GM12878 (cell line): ENCODE measurements at regions of chr11 and their contacts with region 1.

Region 1: GRCh38 chr11:3037040-3037944 is 19.9 kb downstream of the CARS1 start:
- DNase-seq: no peak
- ATAC-seq: peak; percentile 86
- H3K4me3 ChIP-seq: no peak overlapping the region
- H3K27ac ChIP-seq: peak overlapping the region; percentile 69
- H3K4me1 ChIP-seq: peaks cover 29% of the 10 kb centered on the region
- H3K27me3 ChIP-seq: no peaks in the 10 kb centered on the region
- CTCF ChIP-seq: peak; percentile 46 to 75 (median 68)
- EP300 ChIP-seq: no peak
- POLR2A ChIP-seq: 0 out of 2 replicates have a peak, but pooled peaks have one; percentile 22
- RAD21 ChIP-seq: peak; percentile 60

Region 2: DNA sequence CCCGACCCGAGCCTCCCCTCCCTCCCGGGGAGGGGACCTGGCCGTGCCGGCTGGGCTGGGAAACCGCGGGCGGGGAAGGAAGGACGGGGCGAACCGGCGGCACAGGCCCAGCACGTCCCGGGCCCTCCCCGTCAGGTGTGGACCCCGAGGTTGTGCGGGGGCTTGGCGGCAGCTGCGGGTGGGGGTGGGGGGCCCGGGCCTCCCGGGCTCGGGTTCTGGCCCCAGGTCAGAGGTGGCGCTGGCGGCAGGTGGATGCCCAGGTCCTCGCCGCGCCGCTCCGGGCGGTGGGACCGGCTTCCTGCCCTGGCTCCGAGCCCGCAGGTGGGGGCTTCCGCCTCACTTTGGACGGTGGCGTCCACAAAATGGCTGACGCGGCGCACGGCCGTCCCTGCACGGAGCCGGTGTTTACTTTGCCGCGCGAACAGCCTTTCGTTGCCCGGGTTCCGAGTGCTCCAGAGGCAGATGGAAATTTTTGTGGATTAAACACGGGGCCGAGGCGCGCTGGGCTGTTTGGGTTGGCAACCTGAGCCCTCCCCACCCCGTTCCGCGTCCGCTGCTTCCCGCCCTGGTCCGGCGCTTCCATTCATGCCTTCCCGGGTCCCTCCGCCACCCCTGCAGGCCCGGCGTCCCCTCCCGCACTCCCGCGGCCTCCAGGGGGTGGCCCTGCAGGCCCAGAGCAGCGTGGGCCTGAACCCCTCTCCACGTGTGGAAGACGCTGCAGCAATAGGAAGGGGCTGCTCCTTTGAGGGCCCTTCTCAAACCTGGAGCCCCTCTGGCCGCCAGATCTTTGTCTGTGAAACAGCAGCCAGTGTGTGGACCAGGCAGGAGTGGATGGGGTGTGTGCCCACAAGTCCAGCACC is 245.5 kb before region 1 on chr11:
- CTCF ChIA-PET with region 1: no interaction called
- POLR2A ChIA-PET with region 1: no interaction called
- RAD21 ChIA-PET with region 1: no interaction called
- SMC1A ChIA-PET with region 1: no interaction called
- in situ Hi-C with region 1: no loop called
- intact Hi-C with region 1: no loop called
- DNase-seq: no peak
- ATAC-seq: no peak
- H3K4me3 ChIP-seq: no peak overlapping the region
- H3K27ac ChIP-seq: no peak overlapping the region
- H3K4me1 ChIP-seq: no peaks in the 10 kb centered on the region
- H3K27me3 ChIP-seq: no peaks in the 10 kb centered on the region; a peak in 1 of 4 replicates
- CTCF ChIP-seq: no peak
- EP300 ChIP-seq: no peak
- POLR2A ChIP-seq: no peak
- RAD21 ChIP-seq: no peak

Region 3: DNA sequence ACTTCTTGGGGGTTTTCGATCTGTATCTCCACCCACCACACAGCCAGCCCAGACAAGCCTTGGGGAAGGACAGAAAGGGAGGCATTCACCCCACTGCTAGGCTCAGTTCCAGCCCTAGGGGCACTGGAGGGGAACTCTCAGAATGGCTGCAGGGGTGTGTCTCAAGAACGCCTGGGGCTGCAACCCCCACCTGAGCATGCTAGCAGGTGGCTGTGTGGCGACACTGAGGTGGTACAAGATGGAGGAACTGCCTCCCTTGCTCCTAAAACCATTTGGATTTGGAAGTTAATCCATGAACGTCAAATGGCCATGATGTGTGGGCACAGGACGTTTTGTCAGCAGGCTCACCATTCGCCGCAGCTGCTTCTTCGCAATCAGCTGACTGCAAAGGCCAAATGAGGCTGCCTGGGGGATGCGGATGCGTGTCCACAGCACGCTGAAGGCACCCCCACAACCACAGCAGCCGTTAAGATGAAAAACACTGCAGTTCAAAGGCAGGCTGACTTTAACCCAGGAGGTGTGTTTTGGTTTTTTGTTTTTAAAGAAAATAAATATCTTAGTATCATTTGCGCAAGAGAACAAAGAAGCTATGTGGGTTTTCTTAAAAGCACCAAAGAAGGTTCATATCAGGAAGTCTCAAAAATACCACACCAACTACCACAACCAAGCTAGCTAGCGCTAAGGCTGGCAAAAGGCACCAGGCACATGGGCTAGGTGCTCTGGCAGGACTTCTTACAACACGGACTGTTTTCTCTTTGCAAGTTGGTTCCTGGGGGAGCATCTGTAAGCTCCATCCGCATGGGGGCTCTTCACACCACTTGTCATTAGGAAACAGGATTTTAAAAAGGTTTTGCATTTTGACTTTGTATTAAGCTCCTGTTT is 23.0 kb before region 1 on chr11:
- CTCF ChIA-PET with region 1: interaction called, 17 read pairs
- POLR2A ChIA-PET with region 1: no interaction called
- RAD21 ChIA-PET with region 1: no interaction called
- SMC1A ChIA-PET with region 1: interaction called, 4 read pairs
- in situ Hi-C with region 1: no loop called
- intact Hi-C with region 1: no loop called
- DNase-seq: no peak
- ATAC-seq: peak; percentile 88
- H3K4me3 ChIP-seq: no peak overlapping the region
- H3K27ac ChIP-seq: peak overlapping the region; percentile 34; the same call in 1 of the 2 replicates
- H3K4me1 ChIP-seq: peaks cover 17% of the 10 kb centered on the region
- H3K27me3 ChIP-seq: no peaks in the 10 kb centered on the region
- CTCF ChIP-seq: peak in 1 of 3 experiments; percentile 7; a peak in 1 of 6 replicates
- EP300 ChIP-seq: no peak
- POLR2A ChIP-seq: no peak
- RAD21 ChIP-seq: no peak

Region 4: GRCh38 chr11:3021125-3021524 is 16.2 kb before region 1 on chr11:
- CTCF ChIA-PET with region 1: interaction called, 13 read pairs
- POLR2A ChIA-PET with region 1: no interaction called
- RAD21 ChIA-PET with region 1: interaction called, 3 read pairs
- SMC1A ChIA-PET with region 1: no interaction called
- in situ Hi-C with region 1: no loop called
- intact Hi-C with region 1: no loop called
- DNase-seq: no peak
- ATAC-seq: peak; percentile 83
- H3K4me3 ChIP-seq: no peak overlapping the region
- H3K27ac ChIP-seq: no peak overlapping the region
- H3K4me1 ChIP-seq: peaks cover 17% of the 10 kb centered on the region
- H3K27me3 ChIP-seq: no peaks in the 10 kb centered on the region
- CTCF ChIP-seq: peak; percentile 50 to 56 (median 55)
- EP300 ChIP-seq: no peak
- POLR2A ChIP-seq: no peak
- RAD21 ChIP-seq: peak; percentile 74

Region 5: DNA sequence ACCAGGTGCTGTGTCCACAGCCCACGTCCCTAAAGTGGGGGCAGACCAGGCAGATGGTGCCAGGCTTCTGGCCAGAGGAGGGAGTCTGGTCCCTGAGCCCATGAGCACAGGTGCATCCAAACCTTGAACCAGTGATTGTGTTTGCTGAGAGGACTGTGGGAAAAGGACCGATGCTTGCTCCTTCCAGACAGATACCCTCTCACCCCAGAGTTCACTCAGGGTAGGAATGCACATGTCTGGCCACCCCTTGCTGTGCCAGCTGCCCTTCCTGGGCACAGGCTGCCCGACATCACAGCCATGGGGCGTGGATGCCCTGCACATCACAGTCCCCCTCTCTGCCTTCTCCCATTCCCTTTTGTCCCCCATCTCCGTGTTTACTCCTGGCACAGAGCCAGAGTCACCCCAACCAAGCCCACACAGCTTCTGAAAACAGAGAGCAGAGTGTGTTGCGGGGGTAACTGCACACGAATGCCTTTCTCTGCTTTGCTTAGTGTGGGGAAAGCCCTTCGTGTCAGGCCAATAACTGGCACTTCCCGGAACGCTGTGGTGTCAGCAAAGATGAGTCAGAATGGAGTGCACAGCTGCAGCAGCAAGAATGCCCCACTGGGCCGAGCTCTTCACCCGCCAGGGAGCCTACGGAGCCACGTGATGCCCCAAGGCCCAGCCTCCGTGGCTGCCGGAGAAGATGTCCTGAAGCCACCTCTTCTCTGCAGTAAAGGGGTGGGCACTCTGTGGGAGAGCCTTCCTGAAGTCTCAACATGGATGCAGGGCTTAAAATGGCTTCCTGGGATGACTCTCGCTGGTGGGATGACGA is 12.3 kb after region 1 on chr11:
- CTCF ChIA-PET with region 1: interaction called, 77 read pairs
- POLR2A ChIA-PET with region 1: interaction called, 3 read pairs
- RAD21 ChIA-PET with region 1: interaction called, 15 read pairs
- SMC1A ChIA-PET with region 1: interaction called, 8 read pairs
- in situ Hi-C with region 1: no loop called
- intact Hi-C with region 1: no loop called
- DNase-seq: peak; percentile 82
- ATAC-seq: peak; percentile 97
- H3K4me3 ChIP-seq: peak overlapping the region; percentile 50
- H3K27ac ChIP-seq: peak overlapping the region; percentile 81
- H3K4me1 ChIP-seq: peaks cover 32% of the 10 kb centered on the region
- H3K27me3 ChIP-seq: no peaks in the 10 kb centered on the region
- CTCF ChIP-seq: peak; percentile 41 to 78 (median 53); a peak in 4 of 6 replicates
- EP300 ChIP-seq: peak in 1 of 2 experiments; percentile 23; a peak in 1 of 4 replicates
- POLR2A ChIP-seq: peak; percentile 44
- RAD21 ChIP-seq: peak; percentile 54

Region 6: DNA sequence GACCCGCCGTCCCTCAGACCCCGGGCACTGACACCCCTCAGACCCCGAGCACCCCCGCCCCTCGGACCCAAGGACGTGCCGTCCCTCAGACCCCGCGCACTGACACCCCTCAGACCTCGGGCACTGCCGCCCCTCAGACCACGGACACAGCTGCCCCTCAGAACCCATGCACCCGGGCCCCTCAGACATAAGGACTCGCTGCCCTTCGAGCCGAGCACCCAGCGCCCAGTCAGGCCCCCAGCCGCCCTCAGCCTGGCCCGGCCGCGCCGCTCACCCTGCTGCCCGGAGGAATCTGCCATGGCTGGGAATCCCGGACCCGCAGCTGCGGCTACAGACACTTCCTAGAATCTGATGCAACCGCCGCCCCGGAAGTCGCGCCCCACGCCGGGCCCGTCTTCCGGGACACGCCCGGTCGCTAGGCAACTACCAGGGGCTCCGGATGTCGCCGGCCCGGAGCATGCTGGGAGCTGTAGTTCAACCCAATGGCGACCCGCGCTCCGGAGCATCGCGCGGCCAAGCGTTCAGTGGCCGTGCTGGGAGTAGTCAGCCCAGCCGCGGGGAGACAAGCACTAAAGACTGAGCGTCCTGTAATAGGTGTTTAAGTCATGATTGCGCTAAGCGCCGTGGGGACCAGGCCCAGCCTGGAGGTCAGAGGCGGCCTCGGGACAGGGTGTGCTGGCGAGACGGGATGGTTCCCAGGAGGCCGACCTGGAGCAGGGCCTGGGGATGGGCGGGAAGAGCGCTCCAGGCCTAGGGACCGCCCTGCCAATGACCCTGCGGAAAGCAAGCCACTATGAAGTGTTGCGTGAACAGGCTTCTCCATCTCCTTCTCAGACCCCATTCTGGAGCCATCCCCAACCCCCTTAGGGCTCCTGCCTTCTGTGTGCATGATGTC is 20.0 kb after region 1 on chr11 and contains the start of gene CARS1:
- CTCF ChIA-PET with region 1: interaction called, 77 read pairs
- POLR2A ChIA-PET with region 1: no interaction called
- RAD21 ChIA-PET with region 1: no interaction called
- SMC1A ChIA-PET with region 1: interaction called, 10 read pairs
- in situ Hi-C with region 1: no loop called
- intact Hi-C with region 1: no loop called
- DNase-seq: peak; percentile 45
- ATAC-seq: peak; percentile 98
- H3K4me3 ChIP-seq: peak within 1 kb of the TSS; percentile 91
- H3K27ac ChIP-seq: peak within 1 kb of the TSS; percentile 86
- H3K4me1 ChIP-seq: peaks cover 7% of the 10 kb centered on the region
- H3K27me3 ChIP-seq: no peaks in the 10 kb centered on the region; a peak in 1 of 4 replicates
- CTCF ChIP-seq: no peak
- EP300 ChIP-seq: no peak
- POLR2A ChIP-seq: peak; percentile 91
- RAD21 ChIP-seq: no peak
- polyA plus RNA-seq, gene CARS1: 7.8 to 19.7 TPM